HEK293 (cell line): ENCODE measurements at regions of chr1 and their contacts with region 1.

Region 1: GRCh38 chr1:226626577-226626956 is 78.0 kb downstream of the STUM start:
- H3K4me3 ChIP-seq: no peak overlapping the region
- H3K27ac ChIP-seq: no peak overlapping the region
- H3K4me1 ChIP-seq: no peaks in the 10 kb centered on the region
- CTCF ChIP-seq: peak; percentile 86

Region 2: DNA sequence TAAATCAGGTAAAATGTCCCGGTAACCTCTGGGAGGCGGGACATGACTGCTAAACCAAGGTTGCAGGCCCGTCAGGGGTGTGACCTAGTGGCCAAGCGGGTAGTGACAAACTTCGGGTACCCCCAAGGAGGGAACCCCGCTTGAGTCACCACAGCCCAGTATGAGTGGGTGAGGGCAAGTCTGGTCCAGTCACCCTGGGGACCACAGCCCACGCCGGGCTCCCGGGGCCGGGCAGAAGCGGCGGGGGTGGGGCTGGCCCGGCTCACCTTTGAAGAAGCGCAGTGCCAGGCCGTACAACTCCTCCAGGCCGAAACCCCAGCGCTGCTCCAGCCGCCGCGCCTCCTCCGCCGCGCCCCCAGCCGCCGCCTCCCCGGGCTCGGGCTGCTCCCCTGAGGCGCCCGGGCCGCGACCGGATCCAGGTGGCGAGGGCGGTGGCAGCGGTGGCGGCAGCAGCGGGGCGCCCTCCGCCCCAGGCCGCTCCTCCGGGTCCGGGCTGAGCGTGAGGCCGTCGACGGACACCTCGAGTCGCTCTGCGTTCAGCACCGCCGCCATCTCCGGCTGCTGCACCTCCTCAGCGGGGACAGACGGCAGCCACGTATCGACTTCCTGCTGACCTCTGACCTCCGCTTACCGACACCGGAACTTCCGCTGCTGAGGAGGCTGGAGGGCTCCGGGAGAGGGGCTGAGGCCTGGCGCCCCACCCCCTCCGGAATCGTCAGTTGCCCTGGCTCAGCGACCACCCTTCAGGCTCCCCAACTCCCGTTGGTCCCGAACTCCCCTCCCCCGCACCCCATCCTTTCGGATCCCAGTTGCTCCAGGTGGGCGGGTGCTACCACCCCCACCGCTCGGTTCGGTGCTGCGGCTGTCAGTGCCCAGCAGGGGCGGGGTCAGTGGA is 440.2 kb before region 1 on chr1 and contains the start of gene ACBD3:
- CTCF ChIA-PET with region 1: no interaction called
- POLR2A ChIA-PET with region 1: no interaction called
- H3K4me3 ChIP-seq: peak within 1 kb of the TSS; percentile 74
- H3K27ac ChIP-seq: peak within 1 kb of the TSS; percentile 93
- H3K4me1 ChIP-seq: peaks cover 13% of the 10 kb centered on the region
- CTCF ChIP-seq: peak; percentile 82

Region 3: GRCh38 chr1:226820941-226821718 is 194.6 kb after region 1 on chr1:
- CTCF ChIA-PET with region 1: interaction called, 155 read pairs
- POLR2A ChIA-PET with region 1: interaction called, 6 read pairs
- H3K4me3 ChIP-seq: no peak overlapping the region
- H3K27ac ChIP-seq: no peak overlapping the region
- H3K4me1 ChIP-seq: peaks cover 13% of the 10 kb centered on the region
- CTCF ChIP-seq: no peak